Activated T-helper 1 cell treated with anti-CD3 and anti-CD28 coated beads, Interleukin-12 subunit alpha, Interleukin-12 subunit beta, Interleukin-2, Interleukin-4 antibody, amounts not matched to agents 30 ng/mL and 10 ng/mL and 1 ng/mL, durations not matched to agents 14 hours and 24 hours and 36 hours (primary cell): ENCODE measurements at regions of chr17 and their contacts with region 1.

Region 1: GRCh38 chr17:42609182-42609813 is at the starts of genes RETREG3 and TUBG1:
- DNase-seq: peak; percentile 100
- H3K4me3 Mint-ChIP-seq: peak within 1 kb of the TSS; percentile 100
- H3K27ac Mint-ChIP-seq: peak within 1 kb of the TSS; percentile 94
- H3K4me1 Mint-ChIP-seq: peaks cover 39% of the 10 kb centered on the region
- H3K27me3 Mint-ChIP-seq: no peaks in the 10 kb centered on the region
- total RNA-seq, gene RETREG3: 41.1 and 43.4 TPM in 2 replicates
- total RNA-seq, gene TUBG1: 90.0 and 95.2 TPM in 2 replicates

Region 2: DNA sequence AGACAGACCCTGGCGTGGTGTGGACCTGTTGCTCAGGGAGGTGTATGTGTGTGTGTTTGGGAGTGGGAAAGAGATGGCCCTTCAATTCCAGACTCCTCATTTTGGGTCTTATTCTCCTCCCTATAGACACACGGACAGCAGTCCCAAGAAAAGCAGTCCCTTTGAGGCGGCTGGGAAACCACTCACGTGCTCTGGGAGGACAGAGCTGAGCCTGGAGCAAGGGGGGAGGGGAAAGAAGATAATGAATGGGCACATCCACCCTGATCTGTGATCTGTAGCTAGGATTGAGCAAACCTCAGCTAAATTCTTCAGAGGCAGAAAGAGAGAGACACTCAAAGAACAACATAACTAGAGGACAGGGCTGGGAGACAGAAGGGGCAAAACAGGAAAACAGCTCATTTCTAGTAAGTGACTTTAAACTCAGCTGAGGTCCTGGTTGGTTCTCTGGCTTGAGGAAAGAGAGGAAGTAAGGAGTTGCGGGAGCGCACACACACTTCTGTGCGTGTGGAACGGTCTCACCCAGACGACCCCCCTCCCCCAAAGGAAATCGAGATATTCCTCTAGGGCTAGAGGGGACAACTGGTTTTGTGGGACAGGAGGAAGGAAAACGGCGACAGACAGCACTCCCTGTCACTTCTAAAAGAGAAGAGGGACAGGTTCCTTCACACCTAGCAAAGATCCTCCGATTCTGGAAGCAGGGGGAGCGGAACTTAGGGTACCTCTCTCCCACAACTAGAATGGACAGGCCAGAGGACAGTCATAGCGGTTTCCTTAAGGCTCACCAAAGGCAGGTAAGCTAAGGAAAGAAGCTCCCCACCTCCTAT is 455.2 kb before region 1 on chr17:
- intact Hi-C with region 1: loop called (anchors 1 kb)
- DNase-seq: no peak
- H3K4me3 Mint-ChIP-seq: peak overlapping the region; percentile 89
- H3K27ac Mint-ChIP-seq: peak overlapping the region; percentile 75
- H3K4me1 Mint-ChIP-seq: peaks cover 25% of the 10 kb centered on the region
- H3K27me3 Mint-ChIP-seq: no peaks in the 10 kb centered on the region

Region 3: DNA sequence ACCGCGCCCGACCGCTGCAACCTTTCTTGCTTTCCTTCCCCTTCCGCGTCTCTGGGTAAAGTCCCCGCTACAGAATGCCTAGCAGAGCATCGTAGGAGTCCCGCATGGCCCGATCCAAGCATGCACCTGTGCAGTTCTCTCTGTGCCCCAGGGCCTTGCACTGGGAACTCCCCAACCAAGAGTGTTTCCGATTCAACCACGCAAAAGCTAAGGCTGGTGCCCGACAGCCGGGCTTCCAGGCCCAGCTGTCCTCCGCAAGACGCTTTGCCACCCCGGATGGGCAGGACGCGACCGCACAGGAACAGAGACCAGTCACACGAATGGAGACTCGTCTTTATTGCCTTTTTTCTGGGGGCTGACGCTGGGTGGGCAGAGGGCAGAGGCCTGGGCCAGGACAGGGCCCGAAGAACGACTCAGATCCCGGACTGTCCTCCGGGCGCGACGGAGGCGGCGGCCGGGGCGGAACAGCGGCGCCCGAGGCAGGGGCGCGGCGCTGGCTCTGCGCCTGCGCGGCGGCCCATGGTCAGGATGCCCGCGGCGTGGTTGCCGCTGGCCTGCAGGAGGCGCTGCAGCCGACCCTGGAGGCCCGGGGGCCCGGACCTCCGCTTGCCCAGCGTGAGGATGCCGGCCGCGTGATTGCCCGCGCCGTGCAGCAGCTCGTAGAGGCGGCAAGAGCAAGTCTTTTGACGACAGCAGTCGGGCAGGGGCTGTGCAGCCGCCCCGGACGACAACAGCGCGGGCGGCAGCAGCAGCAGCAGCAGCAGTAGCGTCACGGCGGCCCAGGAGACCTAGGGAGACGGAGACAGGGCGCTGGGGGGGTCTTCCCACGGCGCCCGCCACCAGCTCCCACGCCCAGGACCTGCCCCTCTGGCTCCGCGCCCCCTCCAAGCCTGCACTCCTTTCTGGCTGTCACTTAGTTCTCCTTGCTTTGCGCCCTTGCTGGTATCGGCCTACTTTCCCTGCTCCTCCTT is 425.3 kb before region 1 on chr17:
- intact Hi-C with region 1: no loop called
- DNase-seq: peak; percentile 80
- H3K4me3 Mint-ChIP-seq: peak overlapping the region; percentile 94
- H3K27ac Mint-ChIP-seq: peak overlapping the region; percentile 95
- H3K4me1 Mint-ChIP-seq: peaks cover 50% of the 10 kb centered on the region
- H3K27me3 Mint-ChIP-seq: peaks cover 13% of the 10 kb centered on the region

Region 4: DNA sequence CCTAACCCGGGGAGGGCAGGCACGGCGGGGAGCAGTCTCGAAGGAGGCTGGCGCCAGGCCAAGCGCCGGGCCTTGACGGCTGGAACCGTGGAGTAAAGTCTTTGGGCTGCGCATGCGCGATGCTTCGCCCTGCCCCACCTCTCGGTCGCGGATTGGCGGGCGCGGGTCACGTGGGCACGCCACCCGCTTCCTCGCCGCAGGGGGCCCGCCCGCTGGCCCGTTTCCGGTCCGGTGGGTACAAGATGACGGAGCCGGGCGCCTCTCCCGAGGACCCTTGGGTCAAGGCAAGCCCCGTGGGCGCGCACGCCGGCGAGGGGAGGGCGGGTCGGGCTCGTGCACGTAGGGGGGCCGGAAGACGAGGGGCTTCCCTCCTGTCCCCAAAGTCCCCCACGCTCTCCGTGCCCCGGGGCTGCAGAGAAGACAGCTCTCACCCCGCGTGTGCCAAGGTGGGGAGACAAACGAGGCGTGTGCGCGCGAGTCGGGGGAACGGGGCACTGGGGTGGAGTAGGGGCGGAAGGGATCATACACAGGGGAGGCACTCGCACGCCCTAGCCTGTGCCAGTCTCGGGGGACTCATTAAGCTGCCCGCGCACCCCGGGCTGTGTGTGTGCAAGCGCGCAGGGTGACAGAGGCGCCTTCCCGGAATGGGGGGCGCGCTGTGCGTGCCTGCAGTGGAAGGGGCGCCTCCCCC is 42.3 kb before region 1 on chr17 and contains the start of gene MLX:
- intact Hi-C with region 1: loop called (anchors 1 kb)
- DNase-seq: peak; percentile 91
- H3K4me3 Mint-ChIP-seq: peak within 1 kb of the TSS; percentile 89
- H3K27ac Mint-ChIP-seq: peak within 1 kb of the TSS; percentile 87
- H3K4me1 Mint-ChIP-seq: peaks cover 36% of the 10 kb centered on the region
- H3K27me3 Mint-ChIP-seq: no peaks in the 10 kb centered on the region
- total RNA-seq, gene MLX: 74.1 and 75.4 TPM in 2 replicates

Region 5: DNA sequence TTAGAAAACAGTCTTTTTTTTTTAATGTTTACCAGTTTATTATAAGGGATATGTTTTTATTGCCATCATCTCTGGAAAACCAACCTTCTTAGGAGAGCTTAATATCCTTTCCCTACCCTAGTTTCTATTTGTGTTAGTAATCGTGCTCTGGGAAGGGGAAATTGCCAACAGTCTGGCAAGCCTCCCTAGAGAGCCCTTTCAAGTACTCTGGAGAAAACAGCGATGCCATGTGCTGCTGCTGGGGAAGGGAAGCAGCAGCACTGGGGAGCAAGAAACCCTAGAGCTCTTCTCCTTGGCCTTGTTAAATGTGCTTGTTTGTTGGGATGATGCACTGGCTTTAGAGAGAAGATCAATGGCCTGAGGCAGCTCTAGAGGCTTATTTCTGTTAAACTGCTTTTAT is 10.4 kb before region 1 on chr17:
- intact Hi-C with region 1: no loop called
- DNase-seq: no peak
- H3K4me3 Mint-ChIP-seq: no peak overlapping the region
- H3K27ac Mint-ChIP-seq: no peak overlapping the region
- H3K4me1 Mint-ChIP-seq: no peaks in the 10 kb centered on the region
- H3K27me3 Mint-ChIP-seq: no peaks in the 10 kb centered on the region

Region 6: GRCh38 chr17:42659079-42659931 is 50.0 kb after region 1 on chr17 and contains the start of gene TUBG2:
- intact Hi-C with region 1: loop called (anchors 1 kb)
- DNase-seq: peak; percentile 70
- H3K4me3 Mint-ChIP-seq: peak within 1 kb of the TSS; percentile 86
- H3K27ac Mint-ChIP-seq: peak within 1 kb of the TSS; percentile 55
- H3K4me1 Mint-ChIP-seq: peaks cover 26% of the 10 kb centered on the region
- H3K27me3 Mint-ChIP-seq: peaks cover 8% of the 10 kb centered on the region
- total RNA-seq, gene TUBG2: 9.1 and 11.6 TPM in 2 replicates

Region 7: DNA sequence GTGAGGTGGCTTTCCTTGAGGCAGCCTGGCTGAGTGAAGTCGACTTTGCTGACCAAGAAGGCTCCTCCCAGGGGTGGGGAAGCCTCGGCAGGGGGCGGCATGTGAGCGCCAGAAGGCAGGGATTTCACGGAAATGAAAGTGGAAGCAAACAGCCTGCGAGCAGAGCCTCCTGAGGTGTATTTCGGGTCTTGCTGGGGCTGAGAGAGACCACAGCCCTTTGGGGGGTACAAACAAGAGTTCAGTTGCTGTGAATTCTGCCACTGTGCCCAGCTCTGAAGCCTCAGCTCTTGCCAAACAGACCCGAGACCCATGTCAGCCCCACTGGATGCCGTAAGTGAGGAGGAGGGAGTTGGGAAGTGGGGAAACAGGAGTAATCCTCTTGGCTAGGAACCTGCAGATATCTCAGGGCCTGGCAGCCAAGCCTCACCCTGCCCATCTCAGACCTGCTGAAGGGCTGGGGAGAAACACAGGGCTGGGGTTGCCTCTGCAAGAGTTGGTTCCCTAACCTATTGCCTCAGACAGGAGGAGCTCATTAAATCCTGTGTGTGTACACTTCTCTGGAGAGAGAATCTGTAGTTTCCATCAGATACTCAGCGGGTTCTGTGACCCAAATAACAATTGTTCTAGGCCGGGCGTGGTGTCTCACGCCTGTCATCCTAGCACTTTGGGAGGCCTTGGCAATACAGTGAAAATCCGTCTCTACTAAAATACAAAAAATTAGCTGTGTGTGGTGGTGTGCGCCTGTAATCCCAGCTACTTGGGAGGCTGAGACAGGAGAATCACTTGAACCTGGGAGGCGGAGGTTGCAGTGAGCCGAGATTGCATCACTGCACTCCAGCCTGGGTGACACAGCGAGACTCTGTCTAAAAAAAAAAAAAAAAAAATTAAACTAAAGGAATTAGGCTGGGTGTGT is 397.6 kb after region 1 on chr17 and contains the start of gene IFI35:
- intact Hi-C with region 1: loop called (anchors 10 kb)
- DNase-seq: peak; percentile 85
- H3K4me3 Mint-ChIP-seq: peak within 1 kb of the TSS; percentile 100
- H3K27ac Mint-ChIP-seq: peak within 1 kb of the TSS; percentile 99
- H3K4me1 Mint-ChIP-seq: peaks cover 21% of the 10 kb centered on the region
- H3K27me3 Mint-ChIP-seq: no peaks in the 10 kb centered on the region
- total RNA-seq, gene IFI35: 65.8 and 67.0 TPM in 2 replicates